CD14-positive monocyte (primary cell): ENCODE measurements at regions of chr1 and their contacts with region 1.

Region 1: DNA sequence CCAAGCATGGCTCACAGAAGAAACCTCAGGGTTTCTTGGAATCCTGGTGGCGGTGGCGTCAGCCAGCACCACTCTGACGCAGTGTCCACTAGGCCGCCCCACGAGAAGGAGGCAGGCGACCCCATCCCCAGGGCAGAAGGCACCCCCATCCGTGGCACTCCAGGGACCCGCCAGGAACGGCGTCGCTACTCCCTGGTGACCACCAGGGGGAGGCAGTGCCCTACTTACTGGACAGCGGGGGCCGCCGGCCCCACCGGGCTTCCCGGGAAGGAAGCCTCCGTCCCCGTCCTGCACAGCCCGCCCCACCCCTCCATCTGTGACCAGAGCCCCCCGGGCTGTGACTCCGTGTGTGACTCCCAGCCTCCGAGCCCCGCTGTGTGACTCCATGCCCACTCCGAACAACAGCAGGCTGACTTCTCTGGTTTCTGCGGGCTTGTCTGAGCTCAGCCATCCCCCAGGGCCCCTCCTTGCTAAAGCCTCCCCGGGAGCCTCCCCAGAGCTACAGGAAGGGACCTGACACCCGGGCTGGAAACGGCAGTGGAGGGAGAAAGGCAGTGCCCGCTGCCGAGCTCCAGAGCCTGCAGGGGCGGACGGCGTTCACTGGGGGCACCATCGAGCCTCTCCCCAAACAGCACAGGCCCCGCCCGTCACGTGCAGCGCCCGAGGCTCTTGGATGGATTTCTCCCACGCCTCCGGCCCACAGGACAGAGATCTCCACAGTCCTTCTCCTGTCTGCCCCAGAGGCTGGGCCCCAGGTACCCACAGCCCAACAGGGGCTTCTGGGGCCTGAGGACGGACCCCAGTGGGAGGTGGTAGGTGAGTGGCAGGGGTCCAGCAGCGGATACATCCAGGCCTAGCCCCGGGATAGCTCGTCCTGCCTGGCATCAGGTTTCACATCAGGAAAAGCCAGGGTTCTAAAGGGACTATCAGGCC is 21.1 kb downstream of the KIF17 start:
- DNase-seq: peak; percentile 75 to 80 (median 76)
- H3K4me3 ChIP-seq: peak overlapping the region; percentile 66 to 99 (median 67)
- H3K4me3 Mint-ChIP-seq: peak overlapping the region; percentile 94 to 95
- H3K27ac ChIP-seq: peak overlapping the region; percentile 3 to 80
- H3K27ac Mint-ChIP-seq: peak overlapping the region; percentile 46 to 93 (median 84)
- H3K4me1 ChIP-seq: peaks cover 9 to 11% of the 10 kb centered on the region in 2 donors
- H3K4me1 Mint-ChIP-seq: peaks cover 14% of the 10 kb centered on the region
- H3K27me3 ChIP-seq: no peaks in the 10 kb centered on the region
- H3K27me3 Mint-ChIP-seq: peaks cover 2 to 10% (median 9%) of the 10 kb centered on the region in 3 donors
- CTCF ChIP-seq: peak; percentile 100

Region 2: GRCh38 chr1:20732588-20733360 is 36.1 kb after region 1 on chr1 and contains the start of gene SH2D5:
- intact Hi-C with region 1: loop called in 1 of 2 experiments (anchors 5 kb)
- DNase-seq: peak; percentile 91 to 97 (median 92)
- H3K4me3 ChIP-seq: peak within 1 kb of the TSS; percentile 40 to 77 (median 52)
- H3K4me3 Mint-ChIP-seq: peak within 1 kb of the TSS; percentile 82 to 96
- H3K27ac ChIP-seq: peak within 1 kb of the TSS in 1 of 2 donors; percentile 4
- H3K27ac Mint-ChIP-seq: peak within 1 kb of the TSS; percentile 33 to 89 (median 76)
- H3K4me1 ChIP-seq: peaks cover 19 to 25% of the 10 kb centered on the region in 2 donors
- H3K4me1 Mint-ChIP-seq: peaks cover 23% of the 10 kb centered on the region
- H3K27me3 ChIP-seq: peaks cover 26 to 55% of the 10 kb centered on the region in 2 donors
- H3K27me3 Mint-ChIP-seq: peaks cover 48 to 61% (median 57%) of the 10 kb centered on the region in 3 donors
- CTCF ChIP-seq: peak; percentile 33
- polyA plus RNA-seq, gene SH2D5: not detected

Region 3: GRCh38 chr1:21189906-21190500 is 493.3 kb after region 1 on chr1:
- intact Hi-C with region 1: loop called (anchors 2 to 10 kb)
- DNase-seq: no peak
- H3K4me3 ChIP-seq: no peak overlapping the region
- H3K4me3 Mint-ChIP-seq: no peak overlapping the region
- H3K27ac ChIP-seq: no peak overlapping the region
- H3K27ac Mint-ChIP-seq: no peak overlapping the region
- H3K4me1 ChIP-seq: peaks cover 0 to under 1% of the 10 kb centered on the region in 2 donors
- H3K4me1 Mint-ChIP-seq: peaks cover 10% of the 10 kb centered on the region
- H3K27me3 ChIP-seq: no peaks in the 10 kb centered on the region
- H3K27me3 Mint-ChIP-seq: peaks cover 3 to 7% (median 5%) of the 10 kb centered on the region in 3 donors
- CTCF ChIP-seq: no peak

Region 4: GRCh38 chr1:21200767-21201166 is 504.1 kb after region 1 on chr1:
- intact Hi-C with region 1: loop called (anchors 2 to 10 kb)
- DNase-seq: no peak
- H3K4me3 ChIP-seq: no peak overlapping the region
- H3K4me3 Mint-ChIP-seq: no peak overlapping the region
- H3K27ac ChIP-seq: no peak overlapping the region
- H3K27ac Mint-ChIP-seq: no peak overlapping the region
- H3K4me1 ChIP-seq: no peaks in the 10 kb centered on the region
- H3K4me1 Mint-ChIP-seq: no peaks in the 10 kb centered on the region
- H3K27me3 ChIP-seq: no peaks in the 10 kb centered on the region
- H3K27me3 Mint-ChIP-seq: peaks cover 0 to 8% (median 8%) of the 10 kb centered on the region in 3 donors
- CTCF ChIP-seq: no peak